ENCODE measurements at regions of chr3 and their contacts with region 1.

Region 1: DNA sequence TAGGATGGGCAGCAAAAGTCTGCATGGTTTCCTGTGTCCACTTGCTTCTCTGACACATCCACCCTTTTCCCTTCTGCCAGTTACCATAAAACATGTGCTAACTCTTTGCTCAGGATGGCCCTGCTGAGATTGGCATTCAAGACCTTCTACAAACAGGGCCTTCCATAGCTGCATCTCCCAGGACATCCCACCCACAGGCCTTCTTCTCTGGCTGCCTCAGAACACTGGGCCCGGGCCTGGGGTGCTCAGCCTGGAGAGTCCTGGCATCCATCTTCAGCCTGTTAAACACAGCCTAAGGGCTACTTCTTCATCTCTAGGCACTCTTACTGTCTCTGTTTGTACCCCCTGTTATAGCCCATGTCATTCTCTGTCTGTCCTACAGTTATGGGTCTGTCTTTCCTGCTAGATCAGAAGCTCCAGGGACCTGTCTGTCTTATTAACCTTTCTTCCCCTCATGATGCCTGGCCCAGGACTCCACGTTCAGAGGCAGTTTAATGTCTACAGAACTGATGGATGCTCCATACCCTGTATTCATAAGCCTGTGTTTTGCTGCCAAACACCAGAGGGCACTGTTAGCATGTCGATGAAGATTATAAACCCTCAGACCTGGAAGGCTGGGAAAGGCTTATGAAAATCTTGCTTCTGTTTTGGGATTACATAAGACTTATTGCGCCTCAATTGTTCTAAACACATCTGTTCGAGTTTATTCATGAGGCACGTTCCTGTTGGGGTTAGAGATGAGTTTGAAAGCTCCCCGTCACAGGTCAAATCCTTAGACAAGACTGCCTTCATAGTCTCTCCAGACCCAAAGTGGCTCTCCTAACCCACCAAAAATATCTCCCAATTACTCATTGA is 16.5 kb downstream of the SEMA3G start:
- DNase-seq: peak in 7 of 10 donors; percentile 43 to 90 (median 64)
- H3K4me3 ChIP-seq: peak overlapping the region in 10 of 59 donors; percentile 1 to 38 (median 15)
- H3K27ac ChIP-seq: peak overlapping the region in 50 of 59 donors; percentile 6 to 78 (median 54)
- H3K27me3 ChIP-seq: no peaks in the 10 kb centered on the region
- CTCF ChIP-seq: peak; percentile 51 to 91 (median 84)

Region 2: DNA sequence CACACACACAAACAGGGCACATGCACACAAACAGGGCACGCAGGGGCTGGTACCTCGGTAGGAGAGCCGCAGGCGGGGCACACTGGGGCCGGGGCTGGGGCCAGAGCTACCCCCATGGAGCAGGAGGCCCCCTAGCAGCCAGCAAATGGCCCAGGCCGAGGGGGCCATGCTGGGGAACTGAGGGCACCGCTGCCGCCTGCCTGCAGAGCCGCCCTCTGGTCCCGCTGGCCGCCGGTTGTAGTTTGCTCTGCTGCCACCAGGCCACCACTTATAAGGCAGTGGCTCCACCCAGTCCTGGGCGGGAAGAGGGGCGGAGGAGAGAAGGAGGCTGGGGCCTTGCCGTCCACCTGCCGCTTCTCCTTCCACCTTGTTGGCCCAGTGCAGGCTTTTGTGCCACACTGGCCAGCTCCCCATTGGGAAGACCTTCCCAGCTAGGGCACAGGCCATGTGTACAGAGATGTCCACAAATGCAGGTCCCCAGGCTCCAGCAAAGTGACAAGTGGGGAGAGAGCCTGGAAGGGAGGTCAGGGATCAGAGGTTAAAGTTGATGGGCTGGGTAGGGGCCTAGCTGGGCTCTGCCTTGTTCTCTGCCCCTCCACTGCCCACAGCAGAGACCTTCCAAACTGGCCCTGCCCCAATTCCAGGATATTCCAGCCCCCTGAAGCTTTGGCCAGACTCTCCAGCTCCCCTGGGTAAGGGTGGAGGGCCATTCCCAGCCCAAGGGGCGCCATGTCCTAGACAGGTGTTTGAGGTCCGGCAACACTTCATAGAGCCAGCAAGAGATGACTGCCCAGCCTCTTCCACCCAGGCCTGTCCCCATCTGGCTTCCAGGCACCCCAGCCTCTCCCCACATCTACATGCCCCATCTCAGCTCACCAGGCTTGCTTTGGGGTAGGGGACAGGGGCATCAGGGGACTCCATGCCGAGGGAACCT is 16.7 kb after region 1 on chr3 and contains the start of gene SEMA3G:
- intact Hi-C with region 1: loop called in 1 of 2 experiments (anchors 1 kb)
- DNase-seq: peak in 1 of 10 donors; percentile 94
- H3K4me3 ChIP-seq: peak within 1 kb of the TSS in 25 of 59 donors; percentile 8 to 50 (median 35)
- H3K27ac ChIP-seq: peak within 1 kb of the TSS in 2 of 59 donors; percentile 18 to 64
- H3K27me3 ChIP-seq: no peaks in the 10 kb centered on the region
- CTCF ChIP-seq: peak in 40 of 56 donors; percentile 11 to 47 (median 26)
- total RNA-seq, gene SEMA3G: 1.6 to 23.6 (median 7.0) TPM

Region 3: DNA sequence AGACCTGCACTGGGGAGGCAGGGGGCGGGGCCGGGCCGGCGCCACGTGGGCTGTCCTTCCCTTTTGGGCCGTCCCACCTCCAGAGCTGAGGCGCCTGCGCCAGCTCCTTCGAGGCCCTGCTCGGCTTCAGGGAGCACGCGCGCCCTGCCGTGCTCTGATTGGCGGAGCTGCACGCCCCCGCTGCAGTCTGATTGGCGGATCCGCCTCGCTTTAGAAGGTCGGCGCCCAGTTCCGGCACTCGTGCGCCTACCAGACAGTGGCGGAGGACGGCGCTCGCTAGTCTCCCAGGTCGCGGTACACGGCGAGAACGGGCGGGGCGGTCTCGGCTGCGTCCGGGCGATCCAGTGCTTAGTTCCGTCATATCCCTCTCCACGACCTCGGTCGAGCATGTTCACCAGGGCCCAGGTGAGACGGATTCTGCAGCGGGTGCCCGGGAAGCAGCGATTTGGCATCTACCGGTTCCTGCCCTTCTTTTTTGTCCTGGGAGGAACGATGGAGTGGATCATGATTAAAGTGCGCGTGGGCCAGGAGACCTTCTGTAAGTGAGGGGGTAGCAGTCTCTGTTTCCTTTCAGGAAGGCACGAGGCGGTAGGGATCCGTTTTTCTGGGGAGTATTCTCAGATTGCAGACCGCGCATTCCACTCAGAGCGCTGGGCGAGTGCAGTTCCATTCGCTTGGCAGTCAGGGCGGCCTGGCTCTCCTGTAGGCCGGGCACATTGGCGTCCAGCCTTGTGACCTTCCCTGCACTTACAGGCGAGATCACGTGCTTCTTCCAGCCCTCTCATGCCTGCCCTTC is 108.2 kb after region 1 on chr3 and contains the start of gene UQCC5:
- intact Hi-C with region 1: no loop called
- DNase-seq: peak; percentile 95 to 98 (median 96)
- H3K4me3 ChIP-seq: peak within 1 kb of the TSS; percentile 50 to 97 (median 84)
- H3K27ac ChIP-seq: peak within 1 kb of the TSS in 56 of 59 donors; percentile 10 to 92 (median 83)
- H3K27me3 ChIP-seq: no peaks in the 10 kb centered on the region
- CTCF ChIP-seq: peak in 42 of 56 donors; percentile 4 to 63 (median 36)
- total RNA-seq, gene UQCC5: 4.8 to 19.1 (median 10.9) TPM

Region 4: GRCh38 chr3:53554559-53555067 is 1126.2 kb after region 1 on chr3:
- intact Hi-C with region 1: no loop called
- DNase-seq: no peak
- H3K4me3 ChIP-seq: no peak overlapping the region
- H3K27ac ChIP-seq: no peak overlapping the region
- H3K27me3 ChIP-seq: no peaks in the 10 kb centered on the region
- CTCF ChIP-seq: no peak